Ovary (tissue), 10 donors: ENCODE measurements at regions of chrX and their contacts with region 1.

Region 1: DNA sequence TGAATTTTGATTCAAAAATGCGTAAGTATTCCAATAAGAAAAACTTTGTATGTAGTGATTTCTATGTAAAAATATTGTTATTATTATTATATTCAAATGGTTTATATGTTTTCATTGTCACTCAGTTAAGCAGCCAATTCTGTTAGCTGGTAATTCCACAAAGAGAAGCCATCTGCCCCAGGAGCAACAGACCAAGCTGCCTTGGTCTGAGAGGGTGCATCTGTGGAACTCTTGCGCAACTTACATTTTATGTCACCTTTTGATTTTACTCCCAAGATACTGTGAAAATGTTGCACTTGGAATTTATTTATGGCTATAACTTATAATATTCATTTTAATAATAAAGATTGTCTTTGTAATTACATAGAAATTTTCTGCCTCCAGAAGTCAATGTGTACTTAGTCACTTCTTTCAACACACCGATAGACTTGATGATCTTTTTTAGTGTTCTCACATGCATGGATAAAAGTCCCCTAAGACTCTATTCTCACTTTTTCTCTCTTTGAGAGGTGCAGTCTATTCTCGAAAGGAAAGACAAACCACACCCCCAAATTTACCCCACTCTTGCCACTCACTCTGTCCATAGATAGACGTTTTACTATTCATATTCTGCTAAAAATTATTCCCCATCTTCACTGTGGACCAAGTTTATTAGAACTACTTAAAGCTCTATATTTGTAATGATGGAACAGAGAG is 30.6 kb downstream of the GPR174 start:
- DNase-seq: no peak
- H3K4me3 ChIP-seq: no peak overlapping the region
- H3K27ac ChIP-seq: no peak overlapping the region
- H3K4me1 ChIP-seq: no peaks in the 10 kb centered on the region
- H3K27me3 ChIP-seq: no peaks in the 10 kb centered on the region
- CTCF ChIP-seq: no peak
- EP300 ChIP-seq: no peak
- POLR2A ChIP-seq: no peak

Region 2: DNA sequence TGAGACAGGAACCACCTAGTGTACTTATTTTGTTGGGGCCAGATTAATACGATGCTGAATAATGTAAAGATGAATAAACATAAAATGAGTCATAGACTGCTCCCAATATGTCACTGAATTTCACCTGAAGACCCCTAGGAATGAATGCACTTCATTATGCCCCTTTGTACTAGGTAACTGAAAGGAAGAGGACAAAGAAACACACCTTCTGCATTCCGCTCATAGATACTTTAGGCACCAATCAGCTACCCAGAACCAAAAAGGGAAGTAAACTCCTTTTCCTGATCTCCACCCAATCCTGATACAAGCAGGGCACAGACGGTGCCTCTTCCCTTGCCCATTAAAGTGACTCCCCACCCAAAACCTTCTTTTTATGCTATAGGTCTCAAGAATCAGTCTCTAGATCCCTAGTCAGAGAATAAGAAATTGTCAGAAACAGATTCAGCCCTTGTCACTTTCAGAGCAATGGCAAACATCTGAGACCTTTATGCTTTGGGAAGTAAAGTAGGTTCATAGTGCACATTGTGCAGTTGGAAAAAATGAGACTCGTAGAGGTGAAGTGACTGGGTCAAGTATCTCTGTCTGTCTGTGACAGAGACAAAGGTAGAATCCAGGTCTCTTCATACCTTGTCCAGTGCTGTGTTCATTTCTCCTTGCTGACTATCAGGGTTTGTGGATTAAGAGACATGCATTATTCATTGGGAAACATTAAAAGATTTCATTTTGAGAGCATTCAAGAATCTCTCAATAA is 28.3 kb before region 1 on chrX:
- intact Hi-C with region 1: loop called in 1 of 4 experiments (anchors 2 kb)
- DNase-seq: no peak
- H3K4me3 ChIP-seq: no peak overlapping the region
- H3K27ac ChIP-seq: no peak overlapping the region
- H3K4me1 ChIP-seq: no peaks in the 10 kb centered on the region
- H3K27me3 ChIP-seq: no peaks in the 10 kb centered on the region
- CTCF ChIP-seq: no peak
- EP300 ChIP-seq: no peak
- POLR2A ChIP-seq: no peak